ENCODE measurements at regions of chr15 and their contacts with region 1.

Region 1: DNA sequence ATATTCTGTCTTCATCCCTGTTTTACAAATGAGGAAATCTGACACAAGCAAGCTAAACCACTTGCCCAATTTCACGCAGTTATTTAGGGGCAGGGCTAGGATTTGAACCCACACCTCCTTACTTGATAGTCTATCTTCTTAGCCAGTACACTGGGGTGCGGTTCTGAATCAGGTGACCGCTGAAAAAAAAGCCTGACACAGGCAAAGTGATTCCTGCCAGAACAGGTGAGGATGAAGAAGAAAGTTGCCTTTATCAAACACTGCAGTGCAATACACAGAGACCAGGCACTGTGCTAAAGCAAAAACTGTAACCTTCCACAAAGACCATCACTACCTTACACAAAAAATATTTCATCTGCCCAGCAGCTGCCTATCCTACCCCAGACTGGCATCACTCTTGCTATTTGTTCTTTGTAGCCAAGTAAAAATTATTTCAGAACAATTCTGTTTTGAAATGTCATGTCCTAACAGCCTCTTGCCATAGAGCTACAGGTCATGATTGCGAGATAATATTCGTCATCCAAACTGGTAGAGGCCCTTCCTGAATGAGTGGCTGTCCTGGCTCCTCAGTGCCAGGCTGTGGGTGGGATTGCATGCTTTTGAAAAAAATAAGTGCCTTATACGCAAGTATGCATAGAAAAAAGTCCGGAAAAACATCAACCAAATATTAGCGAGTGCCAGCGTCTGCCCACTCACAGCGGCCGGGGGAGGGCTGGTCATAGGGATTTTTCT is 142.3 kb upstream of the TPM1 start:
- DNase-seq: no peak
- ATAC-seq: no peak
- H3K4me3 Mint-ChIP-seq: no peak overlapping the region
- H3K27ac Mint-ChIP-seq: no peak overlapping the region
- H3K4me1 Mint-ChIP-seq: no peaks in the 10 kb centered on the region
- H3K27me3 Mint-ChIP-seq: peaks cover 8% of the 10 kb centered on the region

Region 2: GRCh38 chr15:62847900-62848489 is 52.2 kb before region 1 on chr15:
- CTCF ChIA-PET with region 1: no interaction called
- POLR2A ChIA-PET with region 1: no interaction called
- intact Hi-C with region 1: loop called in 1 of 2 experiments (anchors 2 kb)
- DNase-seq: peak; percentile 73
- ATAC-seq: no peak
- H3K4me3 Mint-ChIP-seq: no peak overlapping the region
- H3K27ac Mint-ChIP-seq: no peak overlapping the region
- H3K4me1 Mint-ChIP-seq: no peaks in the 10 kb centered on the region
- H3K27me3 Mint-ChIP-seq: peaks cover 5% of the 10 kb centered on the region

Measured in activated CD4-positive, alpha-beta T cell treated with anti-CD3 and anti-CD28 coated beads for 36 hours (primary cell).